ENCODE measurements at regions of chr7 and their contacts with region 1.

Region 1: DNA sequence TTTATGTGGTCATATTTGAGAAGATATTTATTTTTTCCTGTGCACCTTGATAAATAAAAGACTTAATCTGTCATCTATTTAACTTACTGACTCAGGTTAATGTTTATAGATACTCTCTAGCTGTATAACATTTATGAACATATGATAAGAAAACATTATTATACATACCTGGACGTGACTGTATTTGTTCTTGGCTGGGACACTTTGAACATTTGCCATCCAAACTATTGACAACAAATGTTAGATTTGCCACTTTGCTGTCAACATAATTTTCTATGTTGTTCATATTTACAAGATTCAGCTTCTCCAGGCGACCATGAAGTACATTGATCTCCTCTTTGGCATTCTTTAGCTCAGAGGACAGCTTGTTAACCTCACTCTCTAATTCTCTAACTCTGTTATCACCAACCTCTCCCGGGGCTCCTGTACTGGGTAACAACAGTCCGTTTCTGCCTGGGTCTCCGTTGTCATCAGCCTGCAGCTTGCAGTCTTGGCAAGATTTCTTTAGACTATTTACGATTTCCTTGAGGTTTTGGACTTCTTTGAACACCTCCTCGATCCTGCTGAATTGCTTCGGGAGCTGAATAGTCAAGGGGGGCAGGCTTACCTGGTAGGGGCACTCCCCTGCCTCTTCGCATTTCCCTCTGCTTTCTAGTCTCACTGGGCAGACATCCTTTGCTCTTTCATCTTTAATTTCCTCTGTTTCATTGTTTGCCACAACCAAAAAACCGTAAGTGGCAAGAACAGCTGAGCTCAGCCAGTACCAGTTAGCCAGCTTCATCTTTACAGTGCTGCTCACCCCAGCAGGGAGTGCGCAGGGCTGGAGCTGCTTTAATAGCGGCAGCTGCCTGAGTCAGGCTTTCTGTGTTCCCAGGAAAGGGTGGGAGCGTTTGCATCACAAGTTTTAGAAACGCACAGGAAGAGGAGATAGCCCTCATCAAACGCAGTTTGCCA is at the start of gene FGL2:
- DNase-seq: peak; percentile 67
- ATAC-seq: peak; percentile 100
- H3K4me3 ChIP-seq: peak within 1 kb of the TSS; percentile 50
- H3K27ac ChIP-seq: peak within 1 kb of the TSS; percentile 40; the same call in 1 of the 2 replicates
- H3K4me1 ChIP-seq: no peaks in the 10 kb centered on the region; the same call in none of the 2 replicates
- H3K27me3 ChIP-seq: no peaks in the 10 kb centered on the region
- CTCF ChIP-seq: no peak
- POLR2A ChIP-seq: no peak
- RAD21 ChIP-seq: no peak
- total RNA-seq, gene FGL2: 0.56 and 1.3 TPM in 2 replicates

Region 2: GRCh38 chr7:77238703-77239136 is 39.4 kb after region 1 on chr7:
- CTCF ChIA-PET with region 1: no interaction called
- POLR2A ChIA-PET with region 1: no interaction called
- dilution Hi-C with region 1: no loop called
- in situ Hi-C with region 1: no loop called
- intact Hi-C with region 1: loop called (anchors 5 kb)
- DNase-seq: no peak
- ATAC-seq: no peak
- H3K4me3 ChIP-seq: no peak overlapping the region
- H3K27ac ChIP-seq: peak overlapping the region; percentile 17; the same call in 1 of the 2 replicates
- H3K4me1 ChIP-seq: peaks cover 11% of the 10 kb centered on the region
- H3K27me3 ChIP-seq: no peaks in the 10 kb centered on the region
- CTCF ChIP-seq: no peak
- POLR2A ChIP-seq: no peak
- RAD21 ChIP-seq: no peak

Region 3: GRCh38 chr7:77252506-77252905 is 53.2 kb after region 1 on chr7:
- CTCF ChIA-PET with region 1: no interaction called
- POLR2A ChIA-PET with region 1: no interaction called
- dilution Hi-C with region 1: no loop called
- in situ Hi-C with region 1: no loop called
- intact Hi-C with region 1: no loop called
- DNase-seq: no peak
- ATAC-seq: no peak
- H3K4me3 ChIP-seq: no peak overlapping the region
- H3K27ac ChIP-seq: peak overlapping the region; percentile 36; the same call in 1 of the 2 replicates
- H3K4me1 ChIP-seq: peaks cover 28% of the 10 kb centered on the region
- H3K27me3 ChIP-seq: no peaks in the 10 kb centered on the region
- CTCF ChIP-seq: no peak
- POLR2A ChIP-seq: no peak
- RAD21 ChIP-seq: no peak

Measured in IMR-90 (cell line).